ENCODE measurements at regions of chr7 and their contacts with region 1.

Region 1: DNA sequence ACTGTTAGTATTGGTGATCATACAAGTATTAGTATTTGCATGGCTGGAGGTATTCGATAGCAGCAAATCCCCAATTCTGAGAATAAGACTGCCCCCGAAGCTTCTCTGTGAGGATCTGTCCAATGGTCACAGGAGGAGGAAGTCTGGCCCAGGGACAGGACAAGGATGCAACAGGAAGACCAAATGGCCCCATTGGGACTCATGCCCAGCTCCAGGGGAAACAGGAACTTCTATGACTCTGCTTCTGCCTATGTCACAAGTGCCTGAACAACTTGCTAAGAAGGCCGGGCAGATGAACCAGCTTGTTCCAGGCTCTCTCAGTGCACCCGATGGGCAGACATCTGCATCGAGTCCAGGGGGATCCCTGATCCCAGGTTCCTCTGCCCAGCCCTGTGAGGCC is 172.0 kb upstream of the GRB10 start:
- DNase-seq: no peak
- H3K4me3 ChIP-seq: no peak overlapping the region
- CTCF ChIP-seq: no peak

Region 2: GRCh38 chr7:50921114-50921813 is 33.5 kb before region 1 on chr7:
- in situ Hi-C with region 1: loop called (anchors 5 kb)
- DNase-seq: no peak
- H3K4me3 ChIP-seq: no peak overlapping the region
- CTCF ChIP-seq: no peak